ENCODE measurements at regions of chr9 and their contacts with region 1.

Region 1: GRCh38 chr9:136858844-136859757 is 7.0 kb downstream of the MAMDC4 start:
- DNase-seq: peak; percentile 68 to 87 (median 84)
- ATAC-seq: peak; percentile 13 to 20
- H3K4me3 ChIP-seq: no peak overlapping the region
- H3K27ac ChIP-seq: no peak overlapping the region
- H3K4me1 ChIP-seq: no peaks in the 10 kb centered on the region
- H3K27me3 ChIP-seq: no peaks in the 10 kb centered on the region

Region 2: GRCh38 chr9:136578915-136579649 is 280.0 kb before region 1 on chr9:
- intact Hi-C with region 1: no loop called
- DNase-seq: peak; percentile 57 to 88 (median 72)
- ATAC-seq: peak; percentile 18 to 42
- H3K4me3 ChIP-seq: no peak overlapping the region
- H3K27ac ChIP-seq: no peak overlapping the region
- H3K4me1 ChIP-seq: no peaks in the 10 kb centered on the region
- H3K27me3 ChIP-seq: no peaks in the 10 kb centered on the region

Region 3: DNA sequence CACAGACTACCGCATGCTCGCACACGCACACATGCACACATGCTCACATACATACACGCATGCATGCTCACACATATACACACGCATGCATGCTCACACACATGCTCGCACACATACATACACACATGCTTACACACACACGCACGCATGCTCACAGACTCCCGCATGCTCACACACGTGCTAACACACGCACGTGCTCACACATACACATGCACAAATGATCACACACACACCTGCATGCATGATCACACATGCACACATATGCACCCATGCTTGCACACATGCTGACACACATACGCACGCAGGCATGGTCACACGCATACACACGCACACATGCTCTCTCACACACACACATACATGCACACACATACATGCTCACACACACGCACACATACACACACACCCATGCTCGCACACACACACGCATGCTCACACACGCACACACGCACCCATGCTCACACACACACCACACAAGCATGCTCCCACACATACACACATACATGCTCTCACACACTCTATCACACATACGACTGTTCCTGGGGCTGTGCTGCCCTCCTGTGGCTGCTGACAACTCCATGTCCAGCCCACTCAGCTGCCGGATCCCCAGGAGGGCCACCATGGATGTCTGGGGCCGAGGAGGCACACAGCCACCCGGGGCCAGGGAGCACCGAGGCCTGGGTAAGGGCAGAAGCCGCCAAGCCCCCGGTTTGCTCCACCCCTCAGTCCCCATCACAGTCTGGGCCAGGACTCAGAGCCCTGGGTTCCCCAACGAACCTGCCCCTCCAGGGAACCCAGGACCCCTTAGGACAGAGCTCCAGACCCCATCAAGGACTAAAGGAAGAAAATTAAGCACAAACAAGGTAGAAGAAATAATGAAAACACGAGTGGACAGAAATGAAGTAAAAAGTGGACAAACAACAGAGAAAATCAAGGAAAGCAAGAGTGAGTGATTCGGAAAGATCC is 227.8 kb before region 1 on chr9:
- intact Hi-C with region 1: no loop called
- DNase-seq: peak; percentile 84 to 93 (median 92)
- ATAC-seq: peak; percentile 83 to 86
- H3K4me3 ChIP-seq: no peak overlapping the region
- H3K27ac ChIP-seq: no peak overlapping the region
- H3K4me1 ChIP-seq: no peaks in the 10 kb centered on the region
- H3K27me3 ChIP-seq: no peaks in the 10 kb centered on the region

Region 4: DNA sequence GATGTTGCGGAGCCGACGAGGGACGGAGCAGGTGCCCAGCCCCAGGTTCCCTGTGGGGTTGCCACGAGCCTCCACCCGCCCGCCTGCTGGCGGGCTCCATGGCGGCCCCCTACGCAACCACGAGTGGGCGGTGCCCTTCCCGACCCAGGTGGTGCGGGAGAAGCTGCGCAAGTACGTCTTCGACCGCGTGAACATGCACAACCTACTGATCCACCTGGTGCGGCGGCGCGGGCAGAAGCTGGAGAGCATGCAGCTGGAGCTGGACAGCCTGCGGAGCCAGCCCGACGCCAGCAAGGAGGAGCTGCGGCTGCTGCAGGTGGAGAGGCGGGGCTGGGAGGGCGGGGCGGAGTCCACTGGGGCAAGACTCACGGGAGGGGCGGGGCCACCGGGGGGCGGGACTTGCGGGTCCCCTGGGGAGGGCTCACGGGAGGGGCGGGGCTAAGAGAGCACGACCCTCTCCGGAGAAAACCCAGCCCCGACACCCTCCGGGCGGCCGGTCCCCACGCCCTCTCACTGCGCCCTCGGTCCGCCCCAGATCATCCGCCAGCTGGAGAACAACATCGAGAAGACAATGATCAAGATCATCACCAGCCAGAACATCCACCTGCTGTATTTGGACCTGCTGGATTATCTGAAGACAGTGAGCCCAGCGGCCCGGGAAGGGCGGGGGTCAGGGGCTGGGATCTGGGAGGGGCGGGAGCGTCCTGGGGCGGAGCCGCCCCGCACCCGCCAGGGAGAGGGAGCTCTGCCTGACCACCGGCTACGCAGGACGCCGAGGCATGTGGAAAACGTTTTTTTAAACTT is 59.0 kb before region 1 on chr9:
- intact Hi-C with region 1: loop called in 1 of 4 experiments (anchors 5 kb)
- DNase-seq: peak; percentile 82 to 94 (median 92)
- ATAC-seq: peak; percentile 73 to 74
- H3K4me3 ChIP-seq: peak overlapping the region; percentile 45
- H3K27ac ChIP-seq: peak overlapping the region; percentile 13
- H3K4me1 ChIP-seq: peaks cover 5% of the 10 kb centered on the region
- H3K27me3 ChIP-seq: no peaks in the 10 kb centered on the region